ENCODE measurements at regions of chr7 and their contacts with region 1.

Region 1: GRCh38 chr7:6589829-6590644 is at the start of gene INTS15:
- DNase-seq: peak; percentile 77
- H3K4me3 Mint-ChIP-seq: peak within 1 kb of the TSS; percentile 83
- H3K27ac Mint-ChIP-seq: peak within 1 kb of the TSS; percentile 77
- H3K4me1 Mint-ChIP-seq: peaks cover 22% of the 10 kb centered on the region
- H3K27me3 Mint-ChIP-seq: no peaks in the 10 kb centered on the region
- total RNA-seq, gene INTS15: 24.9 to 27.5 TPM

Region 2: DNA sequence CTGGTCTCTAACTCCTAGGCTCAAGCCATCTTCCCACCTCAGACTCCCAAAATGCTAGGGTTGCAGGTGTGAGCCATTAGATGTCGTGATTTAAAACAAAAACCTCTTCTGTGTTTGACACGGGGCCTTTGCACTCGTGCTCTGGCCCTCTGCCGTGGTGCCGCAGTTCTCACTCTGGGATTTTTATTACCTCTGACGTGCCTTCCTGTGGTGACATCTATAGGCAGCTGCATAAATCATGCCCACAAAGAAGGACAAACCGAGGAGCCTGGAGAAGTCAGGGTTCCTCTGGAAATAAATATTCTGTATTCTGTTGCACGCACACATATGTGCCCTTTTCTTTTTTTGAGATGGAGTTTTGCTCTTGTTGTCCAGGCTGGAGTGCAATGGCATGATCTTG is 735.3 kb before region 1 on chr7:
- CTCF ChIA-PET with region 1: interaction called, 8 read pairs
- intact Hi-C with region 1: loop called (anchors 5 kb)
- DNase-seq: no peak
- H3K4me3 Mint-ChIP-seq: no peak overlapping the region
- H3K27ac Mint-ChIP-seq: no peak overlapping the region
- H3K4me1 Mint-ChIP-seq: peaks cover 14% of the 10 kb centered on the region
- H3K27me3 Mint-ChIP-seq: no peaks in the 10 kb centered on the region

Region 3: GRCh38 chr7:6577365-6578113 is 12.5 kb before region 1 on chr7 and contains the start of gene ZDHHC4:
- CTCF ChIA-PET with region 1: interaction called, 8 read pairs
- intact Hi-C with region 1: loop called (anchors 1 kb)
- DNase-seq: peak; percentile 91
- H3K4me3 Mint-ChIP-seq: peak within 1 kb of the TSS; percentile 84
- H3K27ac Mint-ChIP-seq: peak within 1 kb of the TSS; percentile 92
- H3K4me1 Mint-ChIP-seq: peaks cover 20% of the 10 kb centered on the region
- H3K27me3 Mint-ChIP-seq: no peaks in the 10 kb centered on the region
- total RNA-seq, gene ZDHHC4: 48.1 to 49.4 TPM

Region 4: DNA sequence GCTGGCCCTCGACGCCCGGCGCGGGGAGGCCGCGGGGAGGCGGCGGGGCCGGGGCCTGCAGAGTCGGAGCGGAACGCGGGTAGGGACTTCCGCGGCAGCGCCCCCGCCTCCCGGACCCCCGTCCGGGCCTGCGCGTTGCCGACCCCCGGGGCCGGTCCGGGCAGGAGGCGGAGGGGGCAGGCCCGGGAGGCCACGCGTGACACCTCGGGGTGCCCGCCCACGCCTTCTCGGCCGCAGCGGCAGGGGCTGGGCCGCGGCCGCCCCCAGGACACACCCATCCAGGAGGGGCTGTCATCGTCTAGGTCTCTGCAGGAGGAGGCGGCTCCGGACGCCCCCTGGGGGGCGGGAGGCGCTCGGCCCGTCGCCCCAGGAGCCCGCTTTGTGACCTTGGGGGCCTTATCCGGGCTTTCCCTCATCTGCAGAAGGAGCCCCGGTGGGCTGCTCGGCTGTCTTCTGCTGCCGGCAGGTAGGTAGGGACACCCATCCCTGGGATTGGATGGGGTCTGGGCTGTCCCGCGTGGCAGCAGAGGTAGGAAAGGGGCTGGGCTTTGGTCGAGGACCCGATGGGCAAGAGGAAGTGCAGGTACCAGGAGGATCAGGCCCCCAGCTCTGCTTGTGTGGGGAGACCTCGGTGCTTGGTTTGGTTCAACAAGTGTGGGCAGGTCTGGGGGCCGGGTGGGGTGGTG is 47.6 kb after region 1 on chr7:
- CTCF ChIA-PET with region 1: interaction called, 5 read pairs
- intact Hi-C with region 1: loop called (anchors 1 kb)
- DNase-seq: peak; percentile 49
- H3K4me3 Mint-ChIP-seq: peak overlapping the region; percentile 77
- H3K27ac Mint-ChIP-seq: peak overlapping the region; percentile 79
- H3K4me1 Mint-ChIP-seq: peaks cover 30% of the 10 kb centered on the region
- H3K27me3 Mint-ChIP-seq: no peaks in the 10 kb centered on the region